ENCODE measurements at regions of chr2 and their contacts with region 1.

Region 1: GRCh38 chr2:170409164-170409535 is 231.2 kb downstream of the MYO3B start:
- H3K4me3 ChIP-seq: peak overlapping the region; percentile 11; the same call in 1 of the 2 replicates
- H3K27ac ChIP-seq: no peak overlapping the region
- H3K4me1 ChIP-seq: no peaks in the 10 kb centered on the region
- CTCF ChIP-seq: peak; percentile 57

Region 2: DNA sequence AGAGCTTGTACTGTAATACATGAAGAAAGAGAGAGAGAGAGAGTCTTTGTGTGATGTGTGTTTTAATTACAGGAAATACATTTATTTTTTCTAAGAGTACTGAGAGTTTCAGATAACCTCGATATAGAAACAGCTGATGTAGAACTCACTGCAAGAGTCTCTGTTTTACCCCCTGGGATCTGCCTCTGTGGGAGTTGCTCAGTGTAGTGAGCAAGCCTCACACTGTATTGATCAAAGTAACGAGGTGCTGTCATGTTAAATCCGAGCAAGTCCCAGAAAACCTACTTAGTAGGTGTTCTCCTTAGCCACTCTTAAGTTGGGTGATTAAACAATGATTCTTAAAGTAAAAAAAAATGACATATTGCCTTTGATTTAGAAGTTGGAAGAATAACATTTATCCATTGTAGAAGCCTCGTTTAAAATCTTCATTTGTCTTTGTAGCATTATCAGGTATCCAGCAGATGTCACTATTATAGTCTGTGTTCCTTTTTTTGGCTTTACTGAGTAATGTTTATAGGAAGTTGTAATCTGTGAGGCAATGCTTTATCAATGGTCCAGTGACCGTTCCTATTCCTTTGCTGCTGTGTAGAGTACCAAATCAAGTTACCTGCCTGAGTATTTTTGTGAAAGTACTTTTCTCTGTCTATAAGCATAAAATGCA is 12.2 kb before region 1 on chr2:
- CTCF ChIA-PET with region 1: interaction called, 56 read pairs
- POLR2A ChIA-PET with region 1: no interaction called
- H3K4me3 ChIP-seq: no peak overlapping the region
- H3K27ac ChIP-seq: no peak overlapping the region
- H3K4me1 ChIP-seq: no peaks in the 10 kb centered on the region
- CTCF ChIP-seq: no peak

Region 3: GRCh38 chr2:170446082-170446481 is 36.9 kb after region 1 on chr2:
- CTCF ChIA-PET with region 1: interaction called, 11 read pairs
- POLR2A ChIA-PET with region 1: no interaction called
- H3K4me3 ChIP-seq: no peak overlapping the region
- H3K27ac ChIP-seq: no peak overlapping the region
- H3K4me1 ChIP-seq: no peaks in the 10 kb centered on the region
- CTCF ChIP-seq: no peak

Region 4: DNA sequence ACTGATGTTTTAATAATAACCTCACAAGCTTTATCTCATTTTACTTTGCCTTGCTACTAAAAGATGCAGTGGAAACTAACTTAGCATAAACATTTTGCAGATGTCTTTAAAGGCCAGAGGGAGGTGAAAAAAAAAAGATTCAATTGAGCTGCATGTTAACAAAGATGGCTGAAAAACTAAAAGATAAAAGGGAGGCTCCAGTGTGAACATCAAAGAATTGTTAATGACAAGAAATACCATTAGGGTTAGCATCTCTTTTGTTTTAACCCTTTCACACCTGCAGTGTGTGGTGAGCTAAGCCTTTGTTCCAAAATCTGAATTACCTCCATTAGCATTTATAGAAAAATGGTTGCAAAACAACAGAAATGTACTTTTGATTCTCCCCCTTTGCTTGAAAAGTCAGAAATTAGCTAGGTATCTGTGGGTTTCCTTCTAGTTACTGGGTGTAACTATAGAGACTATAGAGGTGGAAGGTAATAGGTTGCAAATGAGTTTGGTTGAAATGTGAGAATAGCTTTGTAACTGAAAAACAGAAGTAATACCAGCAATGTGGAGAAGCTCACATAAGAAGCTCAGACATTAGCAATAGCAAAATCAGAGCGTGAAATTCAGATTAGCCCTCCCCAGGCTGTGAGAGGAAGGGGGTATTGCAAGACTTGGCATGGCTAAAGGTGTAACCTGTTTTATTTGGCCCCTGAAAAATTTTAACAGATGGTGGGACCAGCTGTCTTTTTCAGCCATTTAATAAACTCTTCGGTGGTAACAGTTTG is 271.2 kb after region 1 on chr2:
- CTCF ChIA-PET with region 1: interaction called, 10 read pairs
- POLR2A ChIA-PET with region 1: no interaction called
- H3K4me3 ChIP-seq: no peak overlapping the region
- H3K27ac ChIP-seq: no peak overlapping the region
- H3K4me1 ChIP-seq: peaks cover 8% of the 10 kb centered on the region; the same call in 1 of the 2 replicates
- CTCF ChIP-seq: no peak

Region 5: DNA sequence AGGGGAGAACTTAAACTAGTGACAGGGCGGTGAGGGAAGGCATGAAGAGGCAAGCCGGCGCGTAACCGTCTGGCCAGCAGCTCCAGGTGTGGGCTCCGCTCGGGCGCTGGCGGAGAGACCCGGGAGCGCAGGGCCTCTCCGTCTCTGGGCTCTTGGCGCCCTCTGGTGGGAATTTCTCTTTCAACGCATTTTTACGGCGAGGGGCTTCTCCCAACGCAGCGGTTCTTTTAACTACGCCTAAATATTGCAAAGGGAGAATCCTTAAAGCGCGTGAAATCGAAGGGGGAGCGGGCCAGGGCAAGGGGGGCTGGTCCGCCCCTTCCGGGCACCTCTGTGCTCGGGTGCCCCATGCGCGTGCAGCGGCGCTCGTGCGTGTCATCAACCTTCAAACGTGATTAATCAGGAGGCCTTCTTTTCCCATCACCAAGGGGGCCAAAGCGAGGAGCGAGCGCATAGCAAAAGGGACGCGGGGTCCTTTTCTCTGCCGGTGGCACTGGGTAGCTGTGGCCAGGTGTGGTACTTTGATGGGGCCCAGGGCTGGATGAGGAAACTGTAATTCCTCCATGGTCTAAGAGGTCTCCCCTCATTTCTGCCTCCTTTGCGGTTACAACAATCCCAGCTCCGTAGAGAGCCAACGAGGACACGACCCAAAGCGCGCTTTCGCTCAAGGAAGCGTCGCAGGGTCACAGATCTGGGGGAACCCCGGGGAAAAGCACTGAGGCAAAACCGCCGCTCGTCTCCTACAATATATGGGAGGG is 406.8 kb after region 1 on chr2:
- CTCF ChIA-PET with region 1: interaction called, 31 read pairs
- POLR2A ChIA-PET with region 1: interaction called, 3 read pairs
- H3K4me3 ChIP-seq: peak overlapping the region; percentile 55
- H3K27ac ChIP-seq: peak overlapping the region; percentile 84; the same call in 1 of the 2 replicates
- H3K4me1 ChIP-seq: no peaks in the 10 kb centered on the region
- CTCF ChIP-seq: peak; percentile 96